CD4-positive, alpha-beta T cell (primary cell): ENCODE measurements at regions of chr2 and their contacts with region 1.

Region 1: DNA sequence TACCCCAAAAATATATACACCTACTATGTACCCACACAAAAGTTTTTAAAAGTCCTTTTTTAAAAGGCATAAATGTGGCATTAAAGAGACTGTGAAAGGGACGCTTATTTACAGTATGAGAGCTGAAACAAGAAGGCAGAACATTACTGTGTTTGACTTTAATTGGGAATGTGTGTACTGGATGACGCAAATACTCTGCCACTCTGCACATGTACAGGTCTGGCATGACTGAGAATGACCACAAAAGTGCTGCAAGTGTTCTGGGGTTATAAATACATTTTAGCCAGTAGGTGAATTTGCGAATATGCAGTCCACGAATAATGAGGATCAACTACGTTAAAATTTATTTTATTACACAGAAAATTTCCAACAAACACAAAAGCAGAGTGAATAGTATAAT is 11.4 kb downstream of the DARS1 start:
- DNase-seq: no peak
- ATAC-seq: no peak
- H3K4me3 ChIP-seq: no peak overlapping the region
- H3K4me3 Mint-ChIP-seq: no peak overlapping the region
- H3K27ac ChIP-seq: no peak overlapping the region
- H3K27ac Mint-ChIP-seq: no peak overlapping the region
- H3K4me1 ChIP-seq: peaks cover 2% of the 10 kb centered on the region
- H3K4me1 Mint-ChIP-seq: peaks cover 68% of the 10 kb centered on the region
- H3K27me3 ChIP-seq: no peaks in the 10 kb centered on the region
- H3K27me3 Mint-ChIP-seq: no peaks in the 10 kb centered on the region
- CTCF ChIP-seq: no peak

Region 2: DNA sequence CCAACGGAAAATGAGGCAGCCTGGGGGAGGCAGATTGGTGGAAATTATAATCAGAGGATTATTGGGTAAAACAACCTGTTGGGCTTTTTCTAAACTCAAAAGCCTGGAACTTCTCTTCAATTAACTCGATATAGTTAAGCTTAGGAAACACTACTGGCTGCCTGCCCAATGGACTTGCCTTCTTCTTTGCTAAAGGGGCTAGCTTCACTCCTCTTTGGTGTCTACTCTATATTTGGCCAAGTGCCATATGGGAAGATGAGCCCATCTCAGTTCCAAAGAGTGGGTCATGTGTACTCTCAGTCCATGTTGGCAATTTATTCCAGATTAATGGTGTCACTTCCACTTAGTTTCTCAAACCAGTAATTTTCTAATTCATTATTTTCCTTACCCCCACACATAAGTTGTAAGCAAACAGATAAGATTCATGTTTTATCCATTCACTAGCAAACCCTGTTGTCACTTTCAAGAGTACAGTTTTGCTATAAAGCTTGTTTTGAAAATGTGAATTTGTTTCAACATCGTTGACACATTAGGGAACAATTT is 22.9 kb before region 1 on chr2:
- CTCF ChIA-PET with region 1: no interaction called
- POLR2A ChIA-PET with region 1: interaction called, 4 read pairs
- intact Hi-C with region 1: loop called in 1 of 2 experiments (anchors 2 kb)
- DNase-seq: no peak
- ATAC-seq: no peak
- H3K4me3 ChIP-seq: no peak overlapping the region
- H3K4me3 Mint-ChIP-seq: no peak overlapping the region
- H3K27ac ChIP-seq: no peak overlapping the region
- H3K27ac Mint-ChIP-seq: no peak overlapping the region
- H3K4me1 ChIP-seq: peaks cover 7% of the 10 kb centered on the region
- H3K4me1 Mint-ChIP-seq: peaks cover 60% of the 10 kb centered on the region
- H3K27me3 ChIP-seq: no peaks in the 10 kb centered on the region
- H3K27me3 Mint-ChIP-seq: no peaks in the 10 kb centered on the region
- CTCF ChIP-seq: no peak